Psoas muscle (tissue), 8 donors: ENCODE measurements at regions of chr7 and their contacts with region 1.

Region 1: GRCh38 chr7:134089446-134089845 is 37.7 kb upstream of the LRGUK start:
- DNase-seq: no peak
- ATAC-seq: no peak
- H3K4me3 ChIP-seq: no peak overlapping the region
- H3K27ac ChIP-seq: no peak overlapping the region
- H3K4me1 ChIP-seq: no peaks in the 10 kb centered on the region
- H3K27me3 ChIP-seq: no peaks in the 10 kb centered on the region
- CTCF ChIP-seq: no peak

Region 2: DNA sequence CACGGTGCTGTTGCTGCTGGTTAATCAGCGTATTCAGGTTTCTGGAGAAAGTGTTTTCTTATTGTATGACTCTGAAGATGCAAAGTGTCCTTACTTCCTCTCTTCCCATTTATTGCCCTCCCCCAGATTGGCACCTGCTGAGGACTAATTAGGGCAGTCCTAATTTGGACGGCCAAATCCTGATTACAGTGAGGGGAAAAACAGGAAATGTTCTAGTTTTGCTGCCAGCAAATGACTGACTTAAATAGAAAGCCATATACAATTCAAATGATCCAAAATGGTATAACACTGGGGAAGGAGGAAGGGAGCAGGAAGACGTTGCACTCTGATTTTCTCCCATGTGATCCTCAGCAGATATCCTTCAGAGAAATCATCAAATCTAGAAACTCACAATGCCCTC is 184.7 kb before region 1 on chr7:
- intact Hi-C with region 1: no loop called
- DNase-seq: no peak
- ATAC-seq: no peak
- H3K4me3 ChIP-seq: no peak overlapping the region
- H3K27ac ChIP-seq: no peak overlapping the region
- H3K4me1 ChIP-seq: no peaks in the 10 kb centered on the region
- H3K27me3 ChIP-seq: no peaks in the 10 kb centered on the region
- CTCF ChIP-seq: no peak

Region 3: DNA sequence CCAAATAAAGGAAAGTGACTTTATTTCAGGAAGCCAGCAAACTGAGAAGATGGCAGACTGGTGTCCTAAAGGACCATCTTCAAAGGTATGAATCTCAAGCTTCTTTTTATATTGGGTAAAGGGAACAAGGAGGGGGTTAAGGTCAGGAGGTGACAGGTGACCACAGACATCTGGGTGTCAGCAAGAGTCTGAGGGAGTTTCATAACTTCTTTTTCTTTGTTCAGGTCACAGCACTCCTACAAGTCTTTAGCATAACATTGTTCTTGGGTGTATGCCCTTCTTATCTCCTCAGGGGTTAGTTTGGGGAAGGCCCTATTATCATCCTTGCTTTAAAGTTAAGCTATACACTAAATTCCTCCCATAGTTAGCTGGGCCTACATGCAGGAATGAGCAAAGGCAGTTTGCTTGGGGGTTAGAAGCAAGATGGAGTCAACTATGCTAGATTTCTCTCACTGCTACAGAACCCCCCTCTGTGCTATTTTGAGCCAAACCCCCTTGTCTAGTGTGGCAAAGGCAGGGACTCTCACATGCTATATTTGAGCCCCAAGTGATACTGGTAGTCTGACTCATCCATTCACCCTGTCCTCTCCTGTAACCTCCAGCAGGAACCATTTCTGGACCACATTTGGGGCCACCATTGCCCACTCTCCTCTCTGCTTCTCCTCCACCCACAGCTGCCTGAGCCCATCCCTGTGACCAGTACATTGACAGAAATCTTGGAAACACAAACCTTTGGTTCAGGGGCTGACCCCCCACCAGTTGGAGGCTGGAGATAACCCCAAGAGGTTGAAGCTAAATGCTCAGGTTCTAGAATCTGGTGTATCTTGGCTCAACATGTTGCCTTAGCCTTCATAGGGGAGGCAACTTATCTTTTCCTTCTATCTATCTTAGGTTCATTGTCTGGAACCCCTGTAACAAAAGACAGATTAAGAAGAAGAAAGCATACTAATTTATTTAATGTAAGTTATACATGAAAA is 17.8 kb before region 1 on chr7:
- intact Hi-C with region 1: loop called in 1 of 2 experiments (anchors 2 kb)
- DNase-seq: no peak
- ATAC-seq: no peak
- H3K4me3 ChIP-seq: no peak overlapping the region
- H3K27ac ChIP-seq: no peak overlapping the region
- H3K4me1 ChIP-seq: no peaks in the 10 kb centered on the region
- H3K27me3 ChIP-seq: no peaks in the 10 kb centered on the region
- CTCF ChIP-seq: no peak

Region 4: GRCh38 chr7:134174797-134175261 is 85.4 kb after region 1 on chr7:
- intact Hi-C with region 1: no loop called
- DNase-seq: no peak
- ATAC-seq: peak; percentile 66 to 96 (median 82)
- H3K4me3 ChIP-seq: no peak overlapping the region
- H3K27ac ChIP-seq: no peak overlapping the region
- H3K4me1 ChIP-seq: peaks cover 4% of the 10 kb centered on the region
- H3K27me3 ChIP-seq: no peaks in the 10 kb centered on the region
- CTCF ChIP-seq: no peak

Region 5: DNA sequence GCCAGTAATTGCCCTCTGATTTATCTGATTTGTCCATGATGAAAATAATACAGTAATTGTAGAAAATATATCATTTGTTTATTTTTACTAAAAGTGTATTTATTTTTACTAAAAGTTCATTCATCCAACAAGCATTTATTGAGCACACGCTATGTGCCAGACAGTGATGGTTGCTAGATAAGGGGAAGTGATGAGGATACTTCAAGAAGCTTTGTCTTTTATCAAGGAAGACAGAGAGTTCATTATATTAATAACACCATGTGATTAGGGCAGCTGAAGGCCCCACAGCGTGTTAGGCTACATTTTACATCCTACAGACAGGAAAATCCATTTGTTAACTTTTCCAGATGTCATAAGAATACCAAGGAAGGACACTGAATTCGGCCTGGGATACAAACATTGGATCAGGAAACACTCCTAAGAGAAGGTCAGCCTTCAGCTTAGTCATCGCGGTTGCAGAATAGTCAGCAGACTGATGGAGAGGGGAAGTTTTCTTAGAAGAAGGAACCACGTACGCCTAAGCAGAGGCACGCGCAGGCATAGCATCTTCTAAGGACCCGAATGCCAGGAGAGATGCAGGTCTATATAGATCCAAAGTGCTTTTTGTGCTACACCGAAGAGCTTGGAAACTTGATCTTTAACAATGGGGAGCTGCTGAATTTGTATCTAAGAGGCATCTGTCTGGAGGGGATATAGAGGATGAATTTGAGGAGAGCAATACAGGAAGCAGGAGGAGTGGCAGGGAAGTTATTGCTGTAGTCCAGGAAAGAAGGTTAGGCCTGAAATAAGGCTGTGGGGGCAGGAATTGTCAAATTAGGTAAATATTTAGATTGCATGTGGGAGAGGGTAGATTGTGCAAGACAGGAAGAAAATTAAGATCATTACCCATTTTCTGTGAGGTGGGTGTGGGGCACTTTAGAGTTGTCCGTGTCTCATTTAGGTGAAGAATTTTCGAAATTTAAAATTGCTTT is 123.4 kb after region 1 on chr7:
- intact Hi-C with region 1: loop called in 1 of 2 experiments (anchors 5 kb)
- DNase-seq: no peak
- ATAC-seq: no peak
- H3K4me3 ChIP-seq: no peak overlapping the region
- H3K27ac ChIP-seq: no peak overlapping the region
- H3K4me1 ChIP-seq: no peaks in the 10 kb centered on the region
- H3K27me3 ChIP-seq: peaks cover 0 to 2% (median 0%) of the 10 kb centered on the region in 3 donors
- CTCF ChIP-seq: no peak